SK-N-SH (cell line): ENCODE measurements at regions of chr11 and their contacts with region 1.

Region 1: GRCh38 chr11:110199184-110199941 is 97.1 kb downstream of the RDX start:
- DNase-seq: no peak
- H3K4me3 ChIP-seq: no peak overlapping the region
- H3K27ac ChIP-seq: no peak overlapping the region
- H3K4me1 ChIP-seq: peaks cover 0 to 34% of the 10 kb centered on the region in 2 experiments; a peak in 1 of 4 replicates
- H3K27me3 ChIP-seq: no peaks in the 10 kb centered on the region
- CTCF ChIP-seq: no peak
- EP300 ChIP-seq: no peak
- RAD21 ChIP-seq: no peak

Region 2: DNA sequence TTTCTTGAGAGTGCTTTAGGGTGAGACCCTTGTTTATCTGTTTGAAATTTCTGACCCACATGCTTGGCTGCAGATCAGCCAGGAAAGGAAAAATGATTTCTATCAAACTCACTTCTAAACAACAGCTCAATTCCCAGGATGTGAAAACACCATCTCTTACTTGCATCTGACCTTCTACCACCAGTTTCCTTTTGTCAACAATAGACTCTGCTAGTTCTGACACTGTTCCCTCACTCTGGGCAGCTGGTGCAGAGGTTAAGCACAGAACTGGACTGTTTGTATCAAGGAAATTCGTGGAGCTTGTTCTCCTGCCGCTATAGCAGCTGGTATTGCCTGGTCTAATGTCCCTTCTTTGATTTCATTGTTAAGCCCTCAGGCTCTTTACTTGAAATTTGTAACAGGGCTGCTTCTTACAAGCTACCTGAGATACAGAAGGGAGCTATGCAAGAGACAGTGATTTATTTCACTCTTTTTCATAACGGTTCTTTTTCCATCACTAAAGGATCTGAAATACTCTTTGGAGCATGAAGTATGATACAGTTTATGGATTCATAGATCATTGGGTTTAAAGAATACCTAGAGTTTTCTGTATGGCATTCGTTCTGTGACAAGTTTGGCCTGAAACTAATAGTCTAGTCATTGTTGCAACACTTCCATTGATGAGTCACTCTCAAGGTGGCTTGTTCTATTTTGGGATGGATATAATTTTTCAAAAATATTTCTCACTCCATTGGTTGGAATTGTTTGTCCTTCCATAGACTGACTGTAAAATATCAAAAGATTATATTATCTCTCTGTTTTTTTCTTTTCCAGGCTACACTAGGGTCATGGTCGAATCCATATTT is 284.3 kb before region 1 on chr11:
- CTCF ChIA-PET with region 1: no interaction called
- POLR2A ChIA-PET with region 1: no interaction called
- DNase-seq: no peak
- H3K4me3 ChIP-seq: no peak overlapping the region
- H3K27ac ChIP-seq: no peak overlapping the region
- H3K4me1 ChIP-seq: no peaks in the 10 kb centered on the region
- H3K27me3 ChIP-seq: no peaks in the 10 kb centered on the region
- CTCF ChIP-seq: no peak
- EP300 ChIP-seq: no peak
- RAD21 ChIP-seq: no peak

Region 3: GRCh38 chr11:109946322-109946846 is 253.0 kb before region 1 on chr11:
- CTCF ChIA-PET with region 1: interaction called, 14 read pairs
- POLR2A ChIA-PET with region 1: interaction called, 3 read pairs
- DNase-seq: peak; percentile 58
- H3K4me3 ChIP-seq: peak overlapping the region; percentile 39 to 40
- H3K27ac ChIP-seq: peak overlapping the region in 1 of 2 experiments; percentile 57; a peak in 2 of 4 replicates
- H3K4me1 ChIP-seq: peaks cover 0 to 3% of the 10 kb centered on the region in 2 experiments; a peak in 1 of 4 replicates
- H3K27me3 ChIP-seq: no peaks in the 10 kb centered on the region
- CTCF ChIP-seq: peak; percentile 97
- EP300 ChIP-seq: no peak
- RAD21 ChIP-seq: peak; percentile 93

Region 4: GRCh38 chr11:110362971-110363509 is 163.7 kb after region 1 on chr11:
- CTCF ChIA-PET with region 1: interaction called, 33 read pairs
- POLR2A ChIA-PET with region 1: no interaction called
- DNase-seq: no peak
- H3K4me3 ChIP-seq: no peak overlapping the region
- H3K27ac ChIP-seq: no peak overlapping the region
- H3K4me1 ChIP-seq: no peaks in the 10 kb centered on the region; a peak in 1 of 4 replicates
- H3K27me3 ChIP-seq: no peaks in the 10 kb centered on the region
- CTCF ChIP-seq: no peak
- EP300 ChIP-seq: no peak
- RAD21 ChIP-seq: no peak

Region 5: DNA sequence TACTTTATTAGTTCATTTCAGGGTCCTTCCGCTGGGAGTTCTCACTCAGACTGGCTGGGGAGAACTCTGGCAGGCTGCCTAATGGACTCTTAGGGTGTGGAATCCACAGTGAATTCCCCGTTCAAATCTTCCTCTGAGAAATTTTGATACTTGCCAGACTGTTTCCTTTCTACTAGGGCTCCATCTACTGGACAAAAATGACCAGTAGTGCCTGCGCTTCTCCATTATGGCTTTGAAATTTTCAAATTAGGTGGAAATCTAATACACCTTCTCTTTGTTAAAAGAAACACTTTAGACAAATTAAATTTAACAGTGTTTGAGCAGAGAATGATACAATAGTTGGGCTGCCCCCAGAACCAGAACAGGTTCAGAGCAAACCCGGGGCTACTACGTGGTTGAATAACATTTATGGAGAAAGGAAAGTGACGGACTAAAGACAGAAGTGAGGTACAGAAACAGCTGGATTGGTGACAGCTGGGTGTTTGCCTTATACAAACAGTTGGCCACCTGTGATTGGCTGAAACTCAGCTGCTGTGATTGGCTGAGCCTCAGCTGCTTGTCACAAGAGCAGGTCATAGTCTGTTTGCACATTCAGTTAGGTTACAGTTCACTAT is 177.5 kb after region 1 on chr11:
- CTCF ChIA-PET with region 1: interaction called, 70 read pairs
- POLR2A ChIA-PET with region 1: no interaction called
- DNase-seq: peak; percentile 67
- H3K4me3 ChIP-seq: peak overlapping the region; percentile 10 to 24; a peak in 2 of 4 replicates
- H3K27ac ChIP-seq: no peak overlapping the region
- H3K4me1 ChIP-seq: peaks cover 6 to 18% of the 10 kb centered on the region in 2 experiments; a peak in 3 of 4 replicates
- H3K27me3 ChIP-seq: no peaks in the 10 kb centered on the region
- CTCF ChIP-seq: peak; percentile 92
- EP300 ChIP-seq: no peak
- RAD21 ChIP-seq: peak; percentile 83

Region 6: GRCh38 chr11:110429731-110430266 is 230.4 kb after region 1 on chr11 and contains the start of gene FDX1:
- CTCF ChIA-PET with region 1: interaction called, 88 read pairs
- POLR2A ChIA-PET with region 1: no interaction called
- DNase-seq: peak; percentile 88
- H3K4me3 ChIP-seq: peak within 1 kb of the TSS; percentile 86 to 91
- H3K27ac ChIP-seq: peak within 1 kb of the TSS; percentile 54 to 81
- H3K4me1 ChIP-seq: peaks cover 13 to 23% of the 10 kb centered on the region in 2 experiments; a peak in 3 of 4 replicates
- H3K27me3 ChIP-seq: no peaks in the 10 kb centered on the region
- CTCF ChIP-seq: peak; percentile 51; the same call in 1 of the 2 replicates
- EP300 ChIP-seq: no peak
- RAD21 ChIP-seq: no peak
- polyA plus RNA-seq, gene FDX1: 3.7 and 4.0 TPM in 2 replicates